PC-3 (cell line): ENCODE measurements at regions of chr20 and their contacts with region 1.

Region 1: GRCh38 chr20:4014031-4014474 is 1.3 kb downstream of the RNF24 start:
- DNase-seq: peak; percentile 97
- ATAC-seq: peak; percentile 66
- H3K4me3 ChIP-seq: peak overlapping the region; percentile 96
- H3K27ac ChIP-seq: peak overlapping the region; percentile 9; the same call in 1 of the 2 replicates
- H3K4me1 ChIP-seq: peaks cover 34% of the 10 kb centered on the region
- H3K27me3 ChIP-seq: no peaks in the 10 kb centered on the region
- CTCF ChIP-seq: peak; percentile 96

Region 2: GRCh38 chr20:4026093-4026601 is 12.1 kb after region 1 on chr20:
- CTCF ChIA-PET with region 1: interaction called, 6 read pairs
- POLR2A ChIA-PET with region 1: no interaction called
- intact Hi-C with region 1: loop called (anchors 1 kb)
- DNase-seq: peak; percentile 75
- ATAC-seq: peak; percentile 82
- H3K4me3 ChIP-seq: no peak overlapping the region
- H3K27ac ChIP-seq: peak overlapping the region; percentile 39
- H3K4me1 ChIP-seq: peaks cover 31% of the 10 kb centered on the region
- H3K27me3 ChIP-seq: no peaks in the 10 kb centered on the region
- CTCF ChIP-seq: peak; percentile 58

Region 3: DNA sequence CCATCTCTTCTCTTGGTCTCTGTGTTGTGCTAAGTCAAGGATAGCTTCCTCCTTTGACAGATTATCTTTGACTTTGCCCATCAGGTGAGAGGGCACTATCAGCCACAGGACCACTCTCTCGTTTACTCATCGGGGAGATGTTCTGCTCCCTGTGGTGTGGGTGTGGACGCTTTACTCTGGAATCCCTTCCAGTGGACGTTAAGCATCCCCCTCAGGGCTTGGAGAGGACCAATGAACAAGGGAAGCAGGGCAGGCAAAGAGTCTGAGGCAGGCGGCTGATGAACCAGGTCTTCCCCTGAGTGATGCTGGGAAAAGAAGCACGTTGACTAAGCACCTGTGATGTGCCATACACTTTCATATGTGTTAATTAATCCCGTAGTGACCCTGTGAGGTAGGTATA is 22.3 kb after region 1 on chr20:
- CTCF ChIA-PET with region 1: no interaction called
- POLR2A ChIA-PET with region 1: no interaction called
- intact Hi-C with region 1: no loop called
- DNase-seq: no peak
- ATAC-seq: no peak
- H3K4me3 ChIP-seq: no peak overlapping the region
- H3K27ac ChIP-seq: no peak overlapping the region
- H3K4me1 ChIP-seq: peaks cover 18% of the 10 kb centered on the region
- H3K27me3 ChIP-seq: no peaks in the 10 kb centered on the region
- CTCF ChIP-seq: no peak

Region 4: GRCh38 chr20:4076671-4077070 is 62.6 kb after region 1 on chr20:
- CTCF ChIA-PET with region 1: interaction called, 6 read pairs
- POLR2A ChIA-PET with region 1: no interaction called
- intact Hi-C with region 1: loop called (anchors 1 kb)
- DNase-seq: peak; percentile 90
- ATAC-seq: peak; percentile 88
- H3K4me3 ChIP-seq: no peak overlapping the region
- H3K27ac ChIP-seq: peak overlapping the region; percentile 21; the same call in 1 of the 2 replicates
- H3K4me1 ChIP-seq: peaks cover 12% of the 10 kb centered on the region
- H3K27me3 ChIP-seq: no peaks in the 10 kb centered on the region
- CTCF ChIP-seq: no peak

Region 5: DNA sequence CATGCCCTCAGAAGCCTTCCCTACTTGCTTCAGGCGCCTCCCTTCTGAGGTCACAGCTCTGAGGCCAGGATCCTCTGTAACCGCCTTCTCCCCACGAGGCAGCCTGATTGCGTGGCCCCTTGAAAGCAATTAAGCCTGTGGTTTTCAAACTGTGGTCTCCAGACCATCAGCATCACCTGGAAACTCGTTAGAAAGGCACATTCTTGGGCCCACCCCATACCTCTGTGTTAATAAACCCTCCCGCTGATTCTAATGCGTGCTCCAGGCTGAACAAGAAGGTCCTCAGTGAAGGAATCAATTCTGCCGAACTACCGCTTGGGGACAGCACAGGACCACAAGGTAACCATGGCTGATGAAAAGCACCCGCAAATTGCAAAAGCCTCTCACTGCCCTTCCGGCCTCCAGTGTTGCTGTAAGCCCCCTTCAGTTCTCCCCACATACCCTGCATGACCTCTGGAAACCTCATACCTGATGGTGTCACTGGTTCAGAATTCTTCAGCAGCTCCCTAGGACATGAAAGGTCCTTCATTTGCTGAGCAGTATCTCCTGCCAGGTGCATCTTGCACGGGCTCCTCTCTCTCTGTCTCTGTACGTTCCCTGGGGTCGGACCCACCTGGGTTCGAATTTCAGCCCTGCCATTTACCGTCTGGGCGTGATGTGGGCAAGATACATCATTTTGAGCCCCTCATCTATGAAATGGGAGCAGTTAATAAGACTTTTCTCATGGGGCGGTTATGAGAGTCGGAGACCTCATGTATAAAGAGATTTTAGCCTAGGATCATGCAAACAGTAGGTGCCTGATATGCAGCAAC is 94.6 kb after region 1 on chr20:
- CTCF ChIA-PET with region 1: no interaction called
- POLR2A ChIA-PET with region 1: no interaction called
- intact Hi-C with region 1: loop called (anchors 1 kb)
- DNase-seq: peak; percentile 87
- ATAC-seq: peak; percentile 58
- H3K4me3 ChIP-seq: no peak overlapping the region
- H3K27ac ChIP-seq: peak overlapping the region; percentile 85
- H3K4me1 ChIP-seq: peaks cover 39% of the 10 kb centered on the region
- H3K27me3 ChIP-seq: no peaks in the 10 kb centered on the region
- CTCF ChIP-seq: peak; percentile 99

Region 6: DNA sequence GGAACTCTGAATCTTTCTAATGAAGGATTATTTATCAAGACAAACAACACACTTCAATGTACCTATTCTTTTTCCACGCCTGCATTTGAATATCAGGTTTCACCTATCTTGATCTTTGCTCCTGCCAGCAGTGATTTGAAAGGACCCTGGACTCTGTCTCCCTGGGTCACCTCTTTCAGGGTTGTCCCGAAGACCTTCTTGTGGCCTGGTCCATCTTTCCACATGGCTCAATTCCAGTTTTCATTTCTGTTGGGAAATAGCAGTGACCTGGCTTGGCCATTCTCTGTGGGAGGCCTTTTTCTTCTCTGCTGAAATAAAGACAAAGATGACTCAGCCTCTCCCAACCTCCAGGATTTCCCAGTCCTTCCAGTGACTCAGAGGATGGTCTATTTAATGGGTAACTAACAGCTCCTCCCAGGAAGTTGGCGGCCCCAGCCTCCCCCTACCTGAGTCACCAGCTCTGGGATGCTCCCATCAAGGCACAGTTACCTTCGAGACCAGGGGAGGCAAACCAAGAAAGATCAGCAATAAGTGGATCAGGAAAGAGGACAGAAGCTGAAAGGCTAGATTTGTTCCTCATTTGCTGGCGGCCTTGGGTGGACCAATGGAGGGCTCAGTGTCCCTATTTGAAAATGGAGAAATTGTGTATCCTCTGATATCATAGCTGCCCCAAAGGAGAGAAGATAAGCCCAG is 121.5 kb after region 1 on chr20:
- CTCF ChIA-PET with region 1: no interaction called
- POLR2A ChIA-PET with region 1: no interaction called
- intact Hi-C with region 1: no loop called
- DNase-seq: peak; percentile 99
- ATAC-seq: peak; percentile 92
- H3K4me3 ChIP-seq: no peak overlapping the region
- H3K27ac ChIP-seq: peak overlapping the region; percentile 96
- H3K4me1 ChIP-seq: peaks cover 46% of the 10 kb centered on the region
- H3K27me3 ChIP-seq: no peaks in the 10 kb centered on the region
- CTCF ChIP-seq: no peak

Region 7: GRCh38 chr20:4533368-4534133 is 519.5 kb after region 1 on chr20:
- CTCF ChIA-PET with region 1: no interaction called
- POLR2A ChIA-PET with region 1: no interaction called
- intact Hi-C with region 1: no loop called
- DNase-seq: no peak
- ATAC-seq: no peak
- H3K4me3 ChIP-seq: no peak overlapping the region
- H3K27ac ChIP-seq: no peak overlapping the region
- H3K4me1 ChIP-seq: no peaks in the 10 kb centered on the region
- H3K27me3 ChIP-seq: no peaks in the 10 kb centered on the region
- CTCF ChIP-seq: no peak